Aorta (tissue), 5 donors: ENCODE measurements at regions of chr1 and their contacts with region 1.

Region 1: DNA sequence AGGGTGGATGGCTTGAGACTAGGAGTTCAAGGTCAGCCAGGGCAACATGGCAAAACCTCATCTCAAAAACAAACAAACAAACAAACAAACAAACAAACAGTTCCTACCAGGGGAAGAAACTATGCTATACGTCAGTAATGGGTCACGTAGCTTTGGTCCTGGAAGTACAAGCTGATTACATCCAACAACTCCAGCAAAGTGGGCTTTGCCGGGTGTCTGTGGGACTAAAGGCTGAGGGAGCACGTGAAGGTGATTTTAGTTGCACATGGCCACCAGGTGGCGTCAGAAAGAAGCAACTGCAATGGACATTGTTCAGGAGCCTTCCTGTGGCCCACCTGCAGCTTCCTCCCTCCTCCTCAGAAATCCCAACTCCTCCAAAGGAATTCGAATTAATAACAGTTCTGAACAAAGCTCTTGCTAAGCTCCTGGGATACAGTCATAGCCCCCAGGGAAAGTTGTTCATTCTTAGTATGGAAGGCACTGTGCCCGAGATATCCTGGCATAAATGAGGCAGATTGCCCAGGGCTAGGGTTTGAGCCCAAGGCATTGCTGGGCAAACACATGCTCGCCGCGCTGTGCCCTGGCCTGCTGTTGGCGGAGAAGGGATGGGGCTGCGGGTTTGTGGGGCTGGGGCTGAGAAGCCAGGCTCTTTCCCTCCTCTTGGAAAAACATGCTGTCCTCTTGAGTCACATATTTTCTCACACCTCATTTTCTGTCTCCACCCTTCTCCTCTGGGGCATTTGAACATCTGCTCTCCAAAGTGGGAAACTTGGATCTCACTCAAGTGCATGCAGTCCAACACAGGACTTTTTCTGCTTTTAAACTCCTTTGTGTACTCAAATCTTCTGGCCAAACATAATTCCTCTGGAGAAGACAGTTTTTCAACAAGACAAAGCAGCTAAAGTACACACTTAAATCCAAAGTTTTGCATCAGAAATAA is 28.6 kb downstream of the AKNAD1 start:
- DNase-seq: peak; percentile 85 to 90
- ATAC-seq: peak; percentile 72
- H3K4me3 ChIP-seq: no peak overlapping the region
- H3K27ac ChIP-seq: peak overlapping the region in 1 of 2 donors; percentile 66
- H3K4me1 ChIP-seq: no peaks in the 10 kb centered on the region
- H3K27me3 ChIP-seq: no peaks in the 10 kb centered on the region

Region 2: GRCh38 chr1:108877348-108878159 is 49.3 kb after region 1 on chr1:
- intact Hi-C with region 1: loop called (anchors 5 kb)
- DNase-seq: no peak
- ATAC-seq: no peak
- H3K4me3 ChIP-seq: peak overlapping the region; percentile 16 to 73
- H3K27ac ChIP-seq: no peak overlapping the region
- H3K4me1 ChIP-seq: no peaks in the 10 kb centered on the region
- H3K27me3 ChIP-seq: no peaks in the 10 kb centered on the region

Region 3: GRCh38 chr1:108897865-108898720 is 69.8 kb after region 1 on chr1:
- intact Hi-C with region 1: loop called (anchors 1 to 2 kb)
- DNase-seq: no peak
- ATAC-seq: peak; percentile 85
- H3K4me3 ChIP-seq: no peak overlapping the region
- H3K27ac ChIP-seq: no peak overlapping the region
- H3K4me1 ChIP-seq: no peaks in the 10 kb centered on the region
- H3K27me3 ChIP-seq: no peaks in the 10 kb centered on the region